Activated CD4-positive, alpha-beta T cell treated with anti-CD3 and anti-CD28 coated beads, Interleukin-2, amount 10 ng/mL, durations not matched to agents 24 days and 14 days (primary cell): ENCODE measurements at regions of chr9 and their contacts with region 1.

Region 1: DNA sequence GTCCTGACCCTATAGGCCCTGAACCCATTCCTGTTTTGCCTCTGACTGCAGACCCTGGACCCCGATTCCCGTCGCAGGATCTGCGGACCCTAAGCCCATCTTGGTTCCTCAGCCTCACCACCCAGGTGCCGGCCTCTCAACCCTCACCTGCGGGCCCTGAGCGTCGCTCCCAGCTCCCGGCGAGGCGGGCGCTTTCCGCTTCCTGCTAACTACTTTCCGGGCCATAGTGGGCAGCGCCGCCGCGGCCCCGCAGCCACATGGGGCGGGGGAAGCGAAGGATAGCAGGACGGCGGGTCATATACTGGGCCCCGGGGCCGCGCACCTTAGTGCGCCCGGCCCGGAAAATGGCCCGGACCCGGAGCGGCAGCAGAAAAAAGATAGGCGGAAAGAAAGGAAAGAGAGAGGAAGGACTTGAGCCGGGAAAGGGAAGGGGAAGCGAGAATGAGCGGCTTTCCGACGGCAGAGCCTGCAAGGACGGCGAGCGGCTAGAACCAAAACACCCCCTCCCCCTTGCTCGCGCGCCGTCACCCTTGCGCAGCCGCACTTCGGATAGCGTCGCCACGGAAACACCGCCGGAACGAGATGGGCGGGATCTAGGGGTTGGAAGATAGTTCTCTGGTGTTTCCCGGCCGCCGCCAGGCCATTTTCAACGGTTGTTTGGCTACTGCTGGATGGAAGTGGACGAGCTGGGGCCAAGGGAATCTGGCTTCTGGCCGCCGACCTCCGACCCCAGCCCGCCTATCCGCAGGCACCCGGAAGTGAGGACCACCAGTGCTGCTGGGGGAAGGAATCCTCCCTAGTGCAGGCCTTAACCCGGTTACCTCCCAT is at the start of gene DCAF12:
- DNase-seq: peak; percentile 98
- H3K4me3 Mint-ChIP-seq: peak within 1 kb of the TSS; percentile 92
- H3K27ac Mint-ChIP-seq: peak within 1 kb of the TSS; percentile 98
- H3K4me1 Mint-ChIP-seq: peaks cover 38% of the 10 kb centered on the region
- H3K27me3 Mint-ChIP-seq: no peaks in the 10 kb centered on the region
- total RNA-seq, gene DCAF12: 45.6 and 51.9 TPM in 2 replicates

Region 2: DNA sequence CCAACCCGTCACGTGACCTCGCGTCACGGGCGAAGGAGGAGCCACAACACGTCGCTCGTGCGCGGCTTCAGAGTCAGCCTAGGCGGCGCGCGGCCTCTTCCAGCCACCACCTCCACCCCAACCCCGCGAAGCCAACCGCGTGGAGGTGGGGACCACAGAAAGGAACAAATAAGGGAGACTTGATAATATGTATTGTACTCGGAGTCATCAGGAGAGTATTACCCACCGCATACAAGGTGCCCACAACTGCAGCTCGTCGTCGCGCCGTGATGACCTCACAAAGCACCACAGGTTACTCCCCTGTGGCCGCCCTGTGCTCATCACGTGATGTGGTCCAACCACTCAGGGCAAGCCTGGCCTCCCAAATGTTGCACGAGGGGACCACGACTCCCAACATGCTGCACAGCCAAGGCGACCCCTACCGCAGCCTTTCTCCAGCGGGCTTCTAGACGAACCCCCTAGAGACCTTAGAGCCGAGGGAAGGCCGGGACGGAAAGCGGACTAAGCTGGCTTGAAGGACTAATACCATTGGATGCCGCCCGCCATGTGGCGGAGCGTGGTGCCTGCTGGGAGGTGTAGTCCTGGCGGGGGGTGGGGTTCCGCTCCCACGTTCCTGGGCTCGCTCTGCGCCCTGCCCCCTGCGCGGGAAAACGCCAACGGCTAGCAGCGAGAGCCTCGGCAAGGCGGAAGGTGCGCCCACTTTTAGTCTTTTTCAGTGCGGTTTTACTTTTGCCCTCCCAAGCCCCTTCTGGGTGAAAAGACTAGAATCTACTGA is 77.3 kb before region 1 on chr9:
- intact Hi-C with region 1: loop called (anchors 1 kb)
- DNase-seq: peak; percentile 99
- H3K4me3 Mint-ChIP-seq: peak overlapping the region; percentile 96
- H3K27ac Mint-ChIP-seq: peak overlapping the region; percentile 99
- H3K4me1 Mint-ChIP-seq: peaks cover 41% of the 10 kb centered on the region
- H3K27me3 Mint-ChIP-seq: peaks cover 3% of the 10 kb centered on the region

Region 3: DNA sequence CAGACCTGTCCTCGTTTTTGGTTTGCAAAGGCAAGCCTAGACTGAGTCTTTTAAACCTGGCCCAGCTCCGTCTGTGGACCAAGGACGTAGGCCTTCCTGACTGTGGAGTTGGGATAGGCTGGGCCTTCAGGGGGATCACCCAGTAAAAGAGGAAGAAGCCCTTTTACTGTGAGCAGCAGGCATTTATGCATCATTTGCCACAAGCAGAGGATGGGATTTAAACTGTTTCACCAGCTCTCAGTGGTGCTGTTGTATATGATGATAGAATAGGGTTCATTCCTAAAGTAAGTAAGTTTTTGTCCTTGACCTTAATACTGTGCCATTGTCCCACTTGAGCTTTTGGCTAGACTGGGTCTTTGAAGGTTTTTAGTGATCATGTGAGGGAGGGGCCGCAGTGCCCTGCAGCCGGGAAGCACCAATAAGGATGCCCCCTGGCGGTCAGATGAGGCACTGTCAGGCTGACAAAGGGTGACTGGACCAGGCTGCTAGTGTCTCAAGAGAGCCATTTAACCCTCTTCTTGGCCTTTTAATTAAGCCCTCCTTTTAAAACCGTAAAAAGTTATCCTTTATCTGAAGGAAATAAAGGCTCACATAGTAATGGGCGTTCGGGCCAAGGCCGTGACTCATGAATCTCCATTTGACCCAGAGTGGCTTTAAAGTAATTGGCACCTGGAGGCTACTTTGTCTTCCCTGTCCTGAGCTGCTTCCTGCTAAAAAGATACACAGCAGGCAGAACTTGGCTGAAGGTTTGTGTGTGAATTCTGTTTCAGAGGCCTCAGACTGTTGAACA is 126.4 kb after region 1 on chr9:
- intact Hi-C with region 1: loop called (anchors 1 kb)
- DNase-seq: peak; percentile 90
- H3K4me3 Mint-ChIP-seq: no peak overlapping the region
- H3K27ac Mint-ChIP-seq: no peak overlapping the region
- H3K4me1 Mint-ChIP-seq: peaks cover 5% of the 10 kb centered on the region
- H3K27me3 Mint-ChIP-seq: no peaks in the 10 kb centered on the region

Region 4: DNA sequence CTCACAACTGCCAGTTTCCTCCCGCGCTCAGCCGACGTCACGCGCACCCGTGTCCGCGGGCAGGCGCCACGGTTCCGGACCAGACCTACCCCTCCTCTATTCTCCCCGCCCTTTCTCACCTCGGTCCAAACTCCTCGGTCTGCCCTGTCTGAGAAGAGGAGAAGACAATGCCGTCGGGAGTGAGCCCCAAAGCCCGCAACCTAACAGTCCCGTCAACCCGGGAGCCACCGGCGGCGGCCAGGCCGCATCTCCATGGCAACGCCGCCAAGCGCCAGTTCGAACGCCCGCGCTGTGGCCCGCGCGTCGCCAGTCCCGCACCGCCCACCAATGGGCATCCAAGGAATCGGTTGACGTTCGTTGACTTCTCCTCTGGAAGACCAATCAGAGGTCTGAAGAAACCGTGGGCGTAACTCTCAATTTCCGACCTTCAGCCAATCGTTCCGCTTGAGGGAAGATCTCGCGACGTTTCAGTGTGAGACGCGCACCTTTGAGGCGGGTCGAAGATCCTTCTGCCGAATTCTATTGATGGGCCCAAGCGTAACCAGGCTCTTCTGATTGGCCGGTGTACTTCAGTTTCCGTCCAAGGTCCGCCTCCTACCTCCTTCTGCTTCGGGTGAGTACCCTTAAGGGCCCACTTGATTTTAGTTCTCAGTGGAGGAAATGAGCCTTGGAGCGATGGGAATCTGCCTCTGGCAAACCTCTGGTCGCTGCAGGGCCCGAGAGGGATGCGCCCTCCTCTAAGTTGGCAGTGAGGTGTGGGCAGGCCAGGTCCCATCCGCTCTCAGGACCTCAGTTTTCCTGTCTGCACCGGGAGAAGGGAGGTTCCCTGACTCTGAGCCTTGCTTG is 202.8 kb after region 1 on chr9 and contains the starts of genes KIF24 and NUDT2:
- intact Hi-C with region 1: loop called (anchors 1 kb)
- DNase-seq: peak; percentile 99
- H3K4me3 Mint-ChIP-seq: peak within 1 kb of the TSS; percentile 89
- H3K27ac Mint-ChIP-seq: peak within 1 kb of the TSS; percentile 97
- H3K4me1 Mint-ChIP-seq: peaks cover 32% of the 10 kb centered on the region
- H3K27me3 Mint-ChIP-seq: no peaks in the 10 kb centered on the region
- total RNA-seq, gene KIF24: 5.9 and 6.2 TPM in 2 replicates
- total RNA-seq, gene NUDT2: 30.4 and 31.9 TPM in 2 replicates